Head of caudate nucleus (tissue), 42 donors: ENCODE measurements at regions of chr11 and their contacts with region 1.

Region 1: DNA sequence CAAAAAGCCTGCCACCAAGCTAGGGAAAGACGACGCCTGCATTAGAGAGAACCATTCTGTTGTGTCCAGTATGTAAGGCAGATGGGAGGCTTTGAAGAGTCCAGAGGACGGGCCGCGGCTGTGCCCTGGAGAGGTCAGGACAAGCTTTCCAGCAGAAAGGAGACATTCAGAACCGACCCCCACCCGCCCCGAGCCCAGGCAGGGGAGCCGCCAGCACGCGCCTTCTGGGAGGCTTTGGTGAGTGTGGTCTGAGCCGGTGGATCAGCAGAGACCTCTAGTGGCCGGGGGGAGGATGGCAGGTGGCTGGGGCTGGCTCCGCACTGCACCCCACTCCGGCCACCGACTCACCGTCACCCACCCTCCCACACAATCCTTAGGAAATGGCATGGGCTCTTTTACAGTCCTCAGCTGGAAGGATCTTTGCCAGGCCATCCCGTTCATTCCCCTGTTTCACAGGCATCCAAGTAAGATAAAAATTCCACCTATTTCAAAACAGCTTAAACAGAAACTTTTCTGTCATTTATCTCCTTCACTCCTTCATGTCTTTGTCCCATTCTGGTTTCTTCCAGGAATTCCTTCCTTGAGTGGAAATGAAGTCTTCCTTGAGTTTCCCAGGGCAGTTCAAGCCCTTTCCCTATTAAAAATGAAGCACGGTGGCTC is 91.2 kb downstream of the FEZ1 start:
- DNase-seq: peak; percentile 58 to 92 (median 84)

Region 2: DNA sequence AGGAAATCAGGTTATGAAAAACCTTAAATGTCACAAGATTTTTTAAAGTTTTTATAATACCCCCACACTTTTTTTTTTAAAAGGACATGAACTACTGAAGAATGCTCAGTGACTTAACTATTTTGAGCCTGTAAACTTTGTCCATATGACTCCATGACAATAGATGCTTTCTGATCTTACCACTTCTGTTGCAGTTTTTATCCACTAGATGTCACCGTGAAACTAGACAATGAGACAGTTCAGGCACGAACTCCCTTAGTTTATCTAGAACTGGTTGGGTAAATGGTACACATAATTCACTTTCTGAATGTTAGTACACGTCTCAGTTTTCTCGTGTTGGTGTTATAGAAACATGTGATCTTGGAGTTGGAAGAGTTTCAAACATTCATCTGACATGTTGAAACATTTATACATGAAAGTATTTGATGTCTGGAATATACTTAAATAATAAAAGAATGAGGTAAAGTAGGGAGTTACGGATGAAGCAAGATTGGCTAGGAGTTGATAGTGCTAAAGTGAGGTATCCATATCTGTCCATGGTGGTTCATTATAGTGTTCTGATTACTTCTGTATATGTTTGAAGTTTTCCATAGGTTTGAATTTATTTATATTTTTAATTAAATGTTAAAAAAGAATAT is 442.8 kb before region 1 on chr11:
- intact Hi-C with region 1: loop called (anchors 10 kb)
- DNase-seq: peak in 5 of 42 donors; percentile 25 to 76 (median 47)

Region 3: GRCh38 chr11:125091247-125091876 is 313.5 kb before region 1 on chr11:
- intact Hi-C with region 1: loop called (anchors 10 kb)
- DNase-seq: peak in 33 of 42 donors; percentile 25 to 76 (median 54)

Region 4: DNA sequence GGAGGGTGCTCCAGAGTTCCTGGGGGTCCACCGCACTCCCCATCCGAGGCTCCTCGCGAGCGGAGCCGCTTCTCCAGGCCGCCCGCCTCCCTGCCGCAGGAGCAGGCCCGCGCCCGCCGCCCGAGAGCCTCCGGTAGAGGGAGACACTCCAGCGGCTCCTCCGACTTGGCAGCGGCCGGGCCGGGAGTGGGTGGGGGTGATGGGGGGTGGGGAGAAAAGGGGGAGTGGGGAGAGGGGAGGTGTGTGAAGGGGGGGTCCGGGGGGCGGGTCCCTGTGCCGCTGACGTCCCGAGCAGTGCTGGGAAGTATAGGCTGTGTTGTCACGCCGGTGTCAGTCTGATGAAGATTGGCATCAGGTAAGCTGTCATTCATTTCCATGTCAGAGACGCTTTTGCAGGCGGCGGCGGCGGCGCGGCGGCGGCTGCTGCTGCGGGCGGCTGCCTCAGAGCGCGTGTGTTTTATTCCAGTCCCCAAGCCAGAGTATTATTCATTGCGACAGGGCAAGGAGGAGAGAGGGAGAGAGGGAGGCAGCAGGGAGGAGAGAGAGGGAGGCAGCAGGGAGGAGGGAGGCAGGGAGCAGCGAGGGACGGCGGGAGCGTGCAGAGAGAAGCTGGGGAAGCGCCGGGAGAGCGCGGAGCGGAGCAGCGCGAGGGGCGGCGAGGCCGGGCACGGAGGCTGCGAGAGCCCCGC is 240.3 kb before region 1 on chr11 and contains the start of gene PKNOX2:
- intact Hi-C with region 1: loop called (anchors 10 kb)
- DNase-seq: peak; percentile 61 to 94 (median 86)

Region 5: DNA sequence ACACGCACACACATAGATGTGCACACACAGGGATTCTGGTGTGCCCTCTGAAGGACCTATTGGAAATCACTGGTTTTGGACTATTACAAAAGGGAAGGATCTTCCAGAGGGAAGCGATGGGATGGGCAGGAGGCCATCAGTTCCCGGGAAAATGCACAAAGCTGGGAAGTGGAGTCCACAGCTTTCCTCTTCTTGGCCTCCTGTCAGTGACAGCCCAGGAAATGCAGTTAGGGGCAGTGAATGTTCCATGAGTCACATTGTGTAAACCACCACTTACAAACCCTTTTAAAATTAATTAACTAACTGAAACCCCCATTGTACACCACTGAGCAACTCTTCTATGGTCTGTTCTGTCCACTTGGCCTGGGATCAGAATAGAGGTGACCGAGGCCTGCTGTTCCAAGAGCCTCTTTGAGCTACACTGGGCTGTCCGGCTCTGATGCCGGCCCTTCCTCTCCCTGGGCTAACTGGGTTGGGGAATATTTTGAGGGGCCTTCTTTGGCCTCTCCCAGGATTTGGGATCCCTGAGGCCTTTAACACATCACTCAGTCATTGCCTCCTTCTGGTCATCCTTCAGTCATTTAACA is 46.6 kb before region 1 on chr11:
- intact Hi-C with region 1: loop called (anchors 10 kb)
- DNase-seq: peak in 3 of 42 donors; percentile 36 to 74 (median 36)